PC-3 (cell line): ENCODE measurements at regions of chr1 and their contacts with region 1.

Region 1: DNA sequence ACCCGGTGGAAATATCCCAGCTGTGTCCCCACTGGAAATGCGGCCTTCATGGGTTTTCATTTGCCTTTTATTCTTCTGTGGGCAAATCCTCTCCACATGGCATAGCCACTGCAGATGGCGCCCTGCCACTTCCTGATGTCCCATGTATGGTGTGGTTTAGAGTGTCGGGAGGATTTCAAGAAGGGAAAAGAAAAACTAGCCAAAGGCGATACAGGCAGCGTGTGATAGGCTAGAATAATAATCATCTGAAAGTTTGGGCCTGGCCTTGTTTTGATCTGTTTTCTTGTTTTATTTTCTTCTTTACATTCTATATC is 123.6 kb downstream of the PEX14 start:
- DNase-seq: peak; percentile 10
- ATAC-seq: no peak
- H3K4me3 ChIP-seq: no peak overlapping the region
- H3K27ac ChIP-seq: peak overlapping the region; percentile 88
- H3K4me1 ChIP-seq: peaks cover 23% of the 10 kb centered on the region
- H3K27me3 ChIP-seq: no peaks in the 10 kb centered on the region
- CTCF ChIP-seq: 0 out of 2 replicates have a peak, but pooled peaks have one; percentile 29

Region 2: DNA sequence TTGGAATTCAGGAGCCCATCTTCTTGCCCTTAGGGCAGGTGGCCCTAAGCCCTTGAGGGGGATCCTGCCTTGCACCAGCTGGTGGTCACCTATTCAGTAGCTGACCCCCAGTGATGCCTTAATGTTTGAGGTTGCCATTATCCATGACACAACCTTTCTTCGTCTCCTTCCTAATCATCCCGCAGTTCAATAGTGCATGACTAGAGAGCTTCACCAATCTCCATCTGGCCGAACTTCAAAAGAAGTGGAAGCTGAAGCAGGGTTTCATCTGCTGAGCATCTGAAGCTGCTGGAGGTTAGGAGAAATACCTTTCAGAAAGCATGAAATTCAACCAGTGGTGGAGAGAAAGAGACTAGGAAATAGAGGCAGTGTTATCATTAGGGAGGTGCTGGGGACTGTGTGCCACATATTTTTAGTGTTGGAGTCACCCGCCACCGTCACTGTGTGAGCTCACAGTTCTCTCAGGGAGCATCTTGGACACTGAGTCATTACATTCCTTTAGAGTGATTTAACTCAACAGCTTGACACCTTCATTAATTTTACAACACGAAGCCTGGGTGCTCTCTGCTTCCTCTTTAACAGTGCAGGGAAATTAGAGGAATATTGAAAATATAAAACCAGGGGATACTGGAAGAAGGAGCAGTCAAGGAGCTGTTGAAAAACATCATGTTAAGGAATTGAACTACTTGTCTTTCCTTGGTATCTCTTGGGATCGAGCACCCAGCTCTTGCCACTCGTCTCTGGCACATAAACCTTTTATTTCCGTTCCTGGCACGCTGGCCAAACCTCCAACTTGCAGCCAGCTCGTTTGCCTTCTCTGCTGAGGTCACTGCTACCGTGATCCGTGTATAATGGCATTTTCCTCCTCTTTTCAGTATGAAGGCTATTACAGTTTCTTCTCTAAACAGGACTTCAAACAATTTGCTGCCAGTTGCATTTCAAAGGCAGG is 70.0 kb before region 1 on chr1:
- CTCF ChIA-PET with region 1: no interaction called
- POLR2A ChIA-PET with region 1: no interaction called
- intact Hi-C with region 1: loop called (anchors 1 kb)
- DNase-seq: peak; percentile 72
- ATAC-seq: peak; percentile 91
- H3K4me3 ChIP-seq: peak overlapping the region; percentile 2; the same call in 1 of the 2 replicates
- H3K27ac ChIP-seq: peak overlapping the region; percentile 60
- H3K4me1 ChIP-seq: peaks cover 30% of the 10 kb centered on the region
- H3K27me3 ChIP-seq: no peaks in the 10 kb centered on the region
- CTCF ChIP-seq: no peak

Region 3: DNA sequence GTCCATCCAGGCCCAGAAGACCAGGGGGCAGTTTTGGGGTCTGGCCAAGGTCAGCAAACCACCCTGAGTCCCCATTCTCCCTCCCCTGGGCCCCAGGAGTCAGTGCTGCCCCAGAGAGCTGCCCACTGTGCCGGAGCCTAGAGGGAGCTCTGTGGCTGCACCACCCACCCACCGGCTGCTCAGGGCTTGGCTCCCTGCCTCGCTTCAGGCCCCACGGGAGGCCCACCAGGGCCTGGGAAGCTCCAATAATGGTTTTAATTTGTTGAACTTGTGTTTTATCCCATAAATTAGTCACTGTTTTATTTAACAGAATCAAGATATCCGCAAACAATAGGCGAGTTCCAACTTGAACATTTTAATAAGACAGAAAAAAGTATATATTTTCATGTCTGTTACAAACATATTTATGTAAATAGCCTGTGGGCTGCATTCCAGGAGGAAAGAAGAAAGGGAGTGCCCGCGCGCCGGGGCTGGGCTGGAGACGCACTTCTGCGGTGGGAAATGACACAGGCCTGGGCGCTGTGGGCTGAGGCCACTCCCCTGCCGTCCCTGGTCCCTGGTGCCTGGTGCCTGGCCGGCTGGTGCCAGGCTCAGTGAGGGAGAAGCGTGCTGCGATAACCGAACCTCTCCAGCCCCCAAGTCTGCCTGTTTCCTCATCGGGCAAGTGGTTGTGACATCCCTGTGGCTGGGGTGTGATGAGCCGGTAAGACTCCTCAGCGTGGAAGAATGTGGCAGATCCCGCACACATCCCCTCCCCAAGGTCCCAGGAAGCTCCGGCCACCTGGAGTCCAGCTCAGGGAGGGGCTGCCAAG is 36.9 kb after region 1 on chr1:
- CTCF ChIA-PET with region 1: no interaction called
- POLR2A ChIA-PET with region 1: no interaction called
- intact Hi-C with region 1: loop called (anchors 2 kb)
- DNase-seq: peak; percentile 79
- ATAC-seq: peak; percentile 73
- H3K4me3 ChIP-seq: peak overlapping the region; percentile 46; the same call in 1 of the 2 replicates
- H3K27ac ChIP-seq: peak overlapping the region; percentile 92
- H3K4me1 ChIP-seq: peaks cover 24% of the 10 kb centered on the region
- H3K27me3 ChIP-seq: no peaks in the 10 kb centered on the region
- CTCF ChIP-seq: peak; percentile 51